Activated T-helper 2 cell treated with anti-CD3 and anti-CD28 coated beads, Interferon-gamma antibody, Interleukin-2, Interleukin-4, amounts not matched to agents 10 μg/mL and 5 μg/mL and 100 μg/mL, durations not matched to agents 14 hours and 24 hours and 36 hours (primary cell): ENCODE measurements at regions of chr1 and their contacts with region 1.

Region 1: GRCh38 chr1:14915356-14916054 is 238.0 kb upstream of the TMEM51 start:
- DNase-seq: peak; percentile 24
- H3K4me3 Mint-ChIP-seq: no peak overlapping the region
- H3K27ac Mint-ChIP-seq: no peak overlapping the region
- H3K4me1 Mint-ChIP-seq: no peaks in the 10 kb centered on the region
- H3K27me3 Mint-ChIP-seq: peaks cover 2% of the 10 kb centered on the region

Region 2: GRCh38 chr1:15026151-15026489 is 110.6 kb after region 1 on chr1:
- intact Hi-C with region 1: loop called (anchors 2 kb)
- DNase-seq: no peak
- H3K4me3 Mint-ChIP-seq: no peak overlapping the region
- H3K27ac Mint-ChIP-seq: no peak overlapping the region
- H3K4me1 Mint-ChIP-seq: no peaks in the 10 kb centered on the region
- H3K27me3 Mint-ChIP-seq: no peaks in the 10 kb centered on the region

Region 3: GRCh38 chr1:15775706-15776105 is 860.2 kb after region 1 on chr1:
- intact Hi-C with region 1: no loop called
- DNase-seq: no peak
- H3K4me3 Mint-ChIP-seq: no peak overlapping the region
- H3K27ac Mint-ChIP-seq: no peak overlapping the region
- H3K4me1 Mint-ChIP-seq: no peaks in the 10 kb centered on the region
- H3K27me3 Mint-ChIP-seq: peaks cover 4% of the 10 kb centered on the region